ENCODE measurements at regions of chr6 and their contacts with region 1.

Region 1: GRCh38 chr6:36360241-36361054 is 23.8 kb upstream of the BNIP5 start:
- DNase-seq: peak; percentile 79 to 84
- H3K4me3 ChIP-seq: no peak overlapping the region
- H3K4me3 Mint-ChIP-seq: no peak overlapping the region
- H3K27ac Mint-ChIP-seq: no peak overlapping the region
- H3K4me1 ChIP-seq: peaks cover 17% of the 10 kb centered on the region; the same call in 1 of the 2 replicates
- H3K4me1 Mint-ChIP-seq: no peaks in the 10 kb centered on the region
- H3K27me3 ChIP-seq: no peaks in the 10 kb centered on the region
- H3K27me3 Mint-ChIP-seq: no peaks in the 10 kb centered on the region
- CTCF ChIP-seq: peak; percentile 71 to 82

Region 2: GRCh38 chr6:35993150-35993549 is 367.3 kb before region 1 on chr6:
- CTCF ChIA-PET with region 1: no interaction called
- POLR2A ChIA-PET with region 1: no interaction called
- intact Hi-C with region 1: no loop called
- DNase-seq: no peak
- H3K4me3 ChIP-seq: no peak overlapping the region
- H3K4me3 Mint-ChIP-seq: no peak overlapping the region
- H3K27ac Mint-ChIP-seq: no peak overlapping the region
- H3K4me1 ChIP-seq: no peaks in the 10 kb centered on the region
- H3K4me1 Mint-ChIP-seq: no peaks in the 10 kb centered on the region
- H3K27me3 ChIP-seq: no peaks in the 10 kb centered on the region
- H3K27me3 Mint-ChIP-seq: no peaks in the 10 kb centered on the region
- CTCF ChIP-seq: no peak

Region 3: GRCh38 chr6:36123257-36124139 is 236.9 kb before region 1 on chr6:
- CTCF ChIA-PET with region 1: no interaction called
- POLR2A ChIA-PET with region 1: no interaction called
- intact Hi-C with region 1: loop called (anchors 5 kb)
- DNase-seq: peak; percentile 76 to 84
- H3K4me3 ChIP-seq: no peak overlapping the region
- H3K4me3 Mint-ChIP-seq: no peak overlapping the region
- H3K27ac Mint-ChIP-seq: peak overlapping the region; percentile 53
- H3K4me1 ChIP-seq: peaks cover 18% of the 10 kb centered on the region
- H3K4me1 Mint-ChIP-seq: peaks cover 7% of the 10 kb centered on the region
- H3K27me3 ChIP-seq: no peaks in the 10 kb centered on the region
- H3K27me3 Mint-ChIP-seq: no peaks in the 10 kb centered on the region
- CTCF ChIP-seq: peak; percentile 59 to 83

Region 4: GRCh38 chr6:36326356-36326995 is 34.0 kb before region 1 on chr6:
- CTCF ChIA-PET with region 1: no interaction called
- POLR2A ChIA-PET with region 1: no interaction called
- intact Hi-C with region 1: no loop called
- DNase-seq: no peak
- H3K4me3 ChIP-seq: no peak overlapping the region
- H3K4me3 Mint-ChIP-seq: no peak overlapping the region
- H3K27ac Mint-ChIP-seq: no peak overlapping the region
- H3K4me1 ChIP-seq: no peaks in the 10 kb centered on the region
- H3K4me1 Mint-ChIP-seq: no peaks in the 10 kb centered on the region
- H3K27me3 ChIP-seq: no peaks in the 10 kb centered on the region
- H3K27me3 Mint-ChIP-seq: no peaks in the 10 kb centered on the region
- CTCF ChIP-seq: no peak

Region 5: DNA sequence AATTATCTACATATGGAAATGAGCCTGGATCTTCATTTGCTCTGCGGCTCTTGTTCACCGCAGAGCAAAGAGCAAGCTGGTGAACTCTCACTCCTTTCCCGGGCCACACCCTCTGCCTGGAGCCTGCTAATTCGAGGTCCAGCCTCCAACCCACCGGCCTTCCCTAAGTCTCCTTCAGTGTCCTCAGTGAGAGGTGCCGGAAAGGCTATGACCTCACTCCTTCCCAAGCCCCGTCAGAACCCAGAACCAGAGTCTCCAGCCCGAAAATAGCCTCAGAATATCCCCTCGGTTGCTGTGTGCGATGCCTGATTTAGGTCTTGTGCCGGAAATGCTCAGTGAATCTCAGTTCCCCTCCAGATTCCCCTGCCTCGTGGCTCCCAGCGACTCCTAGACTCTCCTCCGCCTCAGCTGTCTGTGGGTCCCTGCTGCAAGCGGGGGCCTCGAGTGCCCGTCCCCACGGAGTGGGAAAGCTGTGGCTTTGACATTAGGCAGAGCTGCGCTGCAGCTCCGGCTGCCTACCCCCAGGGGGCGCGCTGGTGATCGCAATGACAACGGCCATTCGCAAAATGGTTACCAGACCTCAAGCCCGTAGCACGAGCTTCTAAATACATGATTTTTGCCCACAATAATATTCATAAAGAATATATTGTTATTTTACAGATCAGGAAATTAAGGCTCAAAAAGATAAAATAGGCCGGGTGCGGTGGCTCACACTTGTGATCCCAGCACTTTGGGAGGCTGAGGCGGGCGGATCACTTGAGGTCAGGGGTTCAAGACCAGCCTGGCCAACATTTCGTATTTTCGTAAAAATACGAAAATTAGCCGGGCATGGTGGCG is 19.6 kb before region 1 on chr6:
- CTCF ChIA-PET with region 1: interaction called, 17 read pairs
- POLR2A ChIA-PET with region 1: no interaction called
- intact Hi-C with region 1: loop called (anchors 1 kb)
- DNase-seq: peak; percentile 79 to 82
- H3K4me3 ChIP-seq: peak overlapping the region; percentile 28
- H3K4me3 Mint-ChIP-seq: peak overlapping the region; percentile 77
- H3K27ac Mint-ChIP-seq: no peak overlapping the region
- H3K4me1 ChIP-seq: peaks cover 28% of the 10 kb centered on the region
- H3K4me1 Mint-ChIP-seq: no peaks in the 10 kb centered on the region
- H3K27me3 ChIP-seq: no peaks in the 10 kb centered on the region
- H3K27me3 Mint-ChIP-seq: no peaks in the 10 kb centered on the region
- CTCF ChIP-seq: peak; percentile 91 to 92